IMR-90 (cell line): ENCODE measurements at regions of chr21 and their contacts with region 1.

Region 1: GRCh38 chr21:29305068-29305467 is 6.3 kb downstream of the BACH1 start:
- DNase-seq: no peak
- ATAC-seq: no peak
- H3K4me3 ChIP-seq: no peak overlapping the region
- H3K27ac ChIP-seq: peak overlapping the region; percentile 63; the same call in 1 of the 2 replicates
- H3K4me1 ChIP-seq: peaks cover 20% of the 10 kb centered on the region
- H3K27me3 ChIP-seq: no peaks in the 10 kb centered on the region
- CTCF ChIP-seq: no peak
- POLR2A ChIP-seq: no peak
- RAD21 ChIP-seq: no peak

Region 2: DNA sequence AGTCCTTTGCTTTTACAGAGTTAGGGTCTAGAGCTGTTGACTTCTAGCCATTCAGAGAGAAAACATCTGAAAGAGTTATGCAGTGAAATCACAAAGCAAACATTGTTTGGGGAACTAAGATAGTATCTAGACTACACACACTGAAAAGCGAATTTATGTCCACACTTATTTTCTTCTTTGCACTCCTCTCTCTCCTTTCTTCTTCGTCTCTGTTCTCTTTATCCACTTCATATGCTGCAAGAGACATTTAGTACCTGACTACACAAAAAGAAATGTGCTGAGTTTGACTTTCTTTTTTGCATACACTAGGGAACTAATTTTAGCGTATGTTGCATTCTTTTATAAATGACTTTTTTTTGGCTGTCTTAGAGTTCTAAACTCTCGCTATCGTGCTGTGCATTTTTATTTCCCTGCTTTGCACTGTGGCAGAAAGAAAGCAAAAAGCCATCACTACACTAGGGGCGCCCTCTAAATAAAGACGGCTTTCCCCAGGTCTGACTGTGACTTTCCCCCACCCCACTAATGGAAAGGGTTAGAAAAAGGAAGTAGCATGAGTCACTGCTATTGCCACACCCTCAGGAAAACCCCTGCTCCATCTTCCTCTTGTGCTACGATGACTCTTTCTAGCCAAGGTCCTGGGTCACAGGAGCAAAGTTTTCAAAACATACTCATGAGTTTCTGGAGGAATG is 108.9 kb before region 1 on chr21:
- CTCF ChIA-PET with region 1: no interaction called
- POLR2A ChIA-PET with region 1: interaction called, 10 read pairs
- dilution Hi-C with region 1: no loop called
- in situ Hi-C with region 1: no loop called
- intact Hi-C with region 1: no loop called
- DNase-seq: peak; percentile 97
- ATAC-seq: peak; percentile 86
- H3K4me3 ChIP-seq: peak overlapping the region; percentile 22; the same call in 1 of the 2 replicates
- H3K27ac ChIP-seq: peak overlapping the region; percentile 3; the same call in 1 of the 2 replicates
- H3K4me1 ChIP-seq: peaks cover 4% of the 10 kb centered on the region; the same call in 1 of the 2 replicates
- H3K27me3 ChIP-seq: no peaks in the 10 kb centered on the region
- CTCF ChIP-seq: peak; percentile 54
- POLR2A ChIP-seq: no peak
- RAD21 ChIP-seq: peak; percentile 49

Region 3: DNA sequence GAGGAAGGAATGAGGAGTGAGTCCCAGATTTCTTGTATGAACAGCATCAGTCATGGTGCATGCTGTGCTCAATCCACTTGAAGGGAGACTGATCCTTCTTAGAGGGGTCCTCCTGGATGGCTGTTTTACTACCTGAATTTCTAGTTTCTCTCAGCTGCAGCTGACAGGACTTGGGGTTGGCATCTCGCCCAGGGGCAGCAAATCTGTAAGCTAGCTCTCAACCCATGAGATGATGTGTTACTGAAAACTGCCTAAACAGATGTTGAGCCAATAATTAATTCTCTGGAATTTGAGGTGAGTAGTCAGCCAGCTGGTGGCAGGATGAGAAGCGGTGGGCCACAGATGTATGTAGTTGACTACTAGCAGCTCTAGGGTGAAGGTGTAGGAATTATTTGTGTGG is 13.3 kb after region 1 on chr21:
- CTCF ChIA-PET with region 1: no interaction called
- POLR2A ChIA-PET with region 1: no interaction called
- dilution Hi-C with region 1: no loop called
- in situ Hi-C with region 1: no loop called
- intact Hi-C with region 1: loop called (anchors 1 kb)
- DNase-seq: peak; percentile 52
- ATAC-seq: peak; percentile 19; the same call in 1 of the 2 replicates
- H3K4me3 ChIP-seq: no peak overlapping the region
- H3K27ac ChIP-seq: no peak overlapping the region
- H3K4me1 ChIP-seq: peaks cover 24% of the 10 kb centered on the region
- H3K27me3 ChIP-seq: no peaks in the 10 kb centered on the region
- CTCF ChIP-seq: no peak
- POLR2A ChIP-seq: 0 out of 2 replicates have a peak, but pooled peaks have one; percentile 10
- RAD21 ChIP-seq: no peak

Region 4: GRCh38 chr21:29904359-29905282 is 599.6 kb after region 1 on chr21:
- CTCF ChIA-PET with region 1: no interaction called
- POLR2A ChIA-PET with region 1: no interaction called
- dilution Hi-C with region 1: no loop called
- in situ Hi-C with region 1: no loop called
- intact Hi-C with region 1: no loop called
- DNase-seq: no peak
- ATAC-seq: peak; percentile 44; the same call in 1 of the 2 replicates
- H3K4me3 ChIP-seq: no peak overlapping the region
- H3K27ac ChIP-seq: no peak overlapping the region
- H3K4me1 ChIP-seq: no peaks in the 10 kb centered on the region
- H3K27me3 ChIP-seq: no peaks in the 10 kb centered on the region
- CTCF ChIP-seq: no peak
- POLR2A ChIP-seq: no peak
- RAD21 ChIP-seq: no peak